ACHN (cell line): ENCODE measurements at regions of chr12 and their contacts with region 1.

Region 1: DNA sequence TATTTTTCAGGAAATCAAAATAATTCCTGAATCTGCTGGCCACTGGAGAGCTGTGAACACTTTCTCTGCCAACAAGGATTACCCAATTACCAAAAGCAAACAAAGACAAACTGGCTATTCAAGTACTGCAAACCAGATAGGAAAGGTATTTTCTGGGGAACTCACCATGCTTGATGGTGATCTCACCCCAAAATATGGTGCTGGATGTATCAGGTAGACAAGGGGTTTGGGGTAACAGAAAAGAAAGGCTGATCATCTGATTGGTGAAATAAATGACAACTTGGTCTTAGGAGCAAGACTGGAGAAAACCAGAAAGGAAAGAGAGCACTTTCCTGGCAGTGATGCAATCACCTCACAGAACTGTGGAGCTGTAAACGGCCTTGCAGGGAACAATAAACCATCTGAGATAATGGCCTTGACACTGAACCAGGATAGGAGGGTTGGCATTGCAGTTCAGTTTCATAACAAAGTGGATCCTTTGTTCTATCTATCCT is 31.0 kb upstream of the NPFF start:
- DNase-seq: no peak

Region 2: DNA sequence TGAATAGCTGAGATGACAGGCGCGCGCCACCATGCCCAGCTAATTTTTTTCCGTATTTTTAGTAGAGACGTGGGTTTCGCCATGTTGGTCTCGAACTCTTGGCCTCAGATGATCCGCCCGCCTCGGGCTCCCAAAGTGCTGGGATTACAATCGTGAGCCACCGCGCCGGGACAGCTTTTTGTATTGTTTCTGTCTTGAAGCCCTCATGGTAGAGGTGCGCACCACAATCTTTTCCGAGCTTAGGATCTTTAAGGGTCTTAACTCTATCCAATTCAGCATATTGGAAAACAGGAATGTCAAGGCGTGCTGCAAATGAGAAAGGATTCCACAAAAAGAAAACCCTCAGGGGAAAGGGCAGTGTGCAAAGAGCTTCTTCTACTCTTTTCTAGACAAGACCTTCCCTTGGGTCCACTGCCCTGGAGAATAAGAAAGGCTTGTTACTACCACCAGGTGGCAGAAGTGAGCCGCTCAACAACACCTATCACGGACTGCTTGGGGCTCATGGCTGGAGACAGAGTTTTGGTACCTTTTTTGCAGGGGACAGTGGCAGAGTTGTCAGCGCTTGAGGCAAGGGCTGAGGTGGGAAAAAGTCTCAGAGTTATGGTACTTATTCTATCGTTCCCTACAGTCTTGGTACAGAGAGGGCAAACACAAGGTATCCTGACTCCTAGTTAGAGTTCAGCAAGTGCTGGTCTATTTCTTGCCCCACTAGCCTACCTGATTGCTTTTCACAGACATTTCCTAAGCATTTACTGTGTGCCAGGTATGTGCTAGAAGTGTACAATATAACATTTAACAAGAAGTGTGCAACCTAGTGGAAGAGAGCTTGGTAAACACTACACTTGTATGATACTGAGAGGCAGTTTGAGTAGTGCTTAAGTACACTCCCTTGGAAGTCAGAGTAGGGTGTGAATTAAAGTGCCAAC is 185.6 kb before region 1 on chr12:
- in situ Hi-C with region 1: no loop called
- DNase-seq: peak; percentile 90

Region 3: DNA sequence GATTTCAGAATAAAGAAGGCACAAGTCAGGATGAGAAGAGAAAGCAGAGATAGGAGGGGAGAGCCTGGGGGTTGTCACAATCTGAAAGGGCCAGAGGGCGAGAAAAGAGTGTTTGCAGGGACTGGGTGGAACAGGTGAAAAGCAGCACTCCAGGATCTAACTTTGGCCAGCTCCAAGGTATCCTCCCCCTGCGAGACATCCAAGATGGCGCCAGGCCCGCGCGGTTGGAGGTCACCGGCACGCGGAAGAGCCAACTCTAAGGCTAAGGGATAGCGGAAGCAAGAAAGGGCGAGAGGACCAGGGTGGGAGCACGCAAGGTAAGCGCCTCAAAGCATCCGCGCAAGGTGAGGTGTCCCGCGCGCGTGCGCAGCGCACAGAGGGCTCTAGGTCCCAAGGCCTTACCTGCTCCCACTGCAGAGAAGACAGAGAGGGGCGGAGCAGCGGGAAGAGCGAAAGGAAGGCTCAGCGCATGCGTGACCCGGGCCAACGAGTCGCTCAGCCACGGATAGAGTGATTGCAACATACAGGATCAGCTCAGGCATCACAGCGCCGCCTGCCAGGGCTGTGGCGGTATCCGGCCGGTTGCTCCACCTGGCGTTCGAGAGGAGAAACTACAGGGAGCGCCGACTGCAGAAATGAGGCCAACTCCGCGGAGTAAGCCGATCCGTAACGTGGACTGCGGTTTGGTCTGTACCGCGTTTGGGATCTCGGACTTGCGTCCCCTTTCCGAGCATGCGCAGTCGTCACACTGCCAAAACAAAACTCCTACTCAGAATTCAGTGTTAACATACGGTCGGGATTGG is 137.6 kb after region 1 on chr12 and contains the start of gene ATP5MC2:
- in situ Hi-C with region 1: loop called (anchors 10 kb)
- DNase-seq: peak; percentile 99